ENCODE measurements at regions of chr9 and their contacts with region 1.

Region 1: GRCh38 chr9:114653556-114654159 is 3.9 kb downstream of the TEX53 start:
- DNase-seq: peak; percentile 55
- H3K4me3 ChIP-seq: no peak overlapping the region
- H3K27ac ChIP-seq: no peak overlapping the region
- H3K27me3 ChIP-seq: peaks cover 4% of the 10 kb centered on the region
- CTCF ChIP-seq: peak; percentile 99

Region 2: DNA sequence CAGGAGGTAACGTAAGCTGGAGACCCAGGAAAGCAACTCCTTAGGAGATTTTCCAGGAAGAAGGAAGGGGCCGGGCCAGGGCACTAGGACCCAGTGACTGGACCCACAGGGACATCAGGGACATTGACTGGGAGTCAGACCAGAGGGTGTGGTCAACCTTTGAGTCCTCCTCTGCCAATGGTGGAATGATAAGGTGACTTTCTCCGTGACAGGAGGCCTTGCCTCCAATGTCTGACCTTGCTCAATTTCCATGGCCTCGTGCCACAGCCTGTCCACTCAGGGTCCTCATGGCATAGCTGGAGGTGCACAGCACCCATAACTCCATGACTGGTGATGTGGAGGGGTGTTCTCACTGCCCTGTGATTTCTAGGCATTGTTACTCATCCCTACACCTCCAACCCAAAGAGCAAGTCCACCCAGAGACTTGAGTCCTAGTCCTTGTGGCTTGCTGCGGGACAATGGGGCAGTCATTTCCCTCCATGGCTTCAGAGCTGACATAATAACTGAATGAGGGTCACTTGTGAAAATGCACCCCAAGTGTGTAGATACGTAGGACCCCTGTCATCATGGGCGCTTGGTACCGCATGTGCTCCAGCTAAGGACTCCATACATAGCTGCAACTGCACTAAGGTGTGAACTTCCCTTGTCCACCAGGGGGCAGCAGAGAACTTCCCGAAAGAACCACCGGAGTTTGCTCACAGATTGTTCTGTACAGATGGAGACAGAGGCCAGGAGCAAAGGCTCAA is 571.5 kb before region 1 on chr9:
- CTCF ChIA-PET with region 1: no interaction called
- POLR2A ChIA-PET with region 1: no interaction called
- DNase-seq: peak; percentile 74
- H3K4me3 ChIP-seq: no peak overlapping the region
- H3K27ac ChIP-seq: no peak overlapping the region
- H3K27me3 ChIP-seq: peaks cover 14% of the 10 kb centered on the region
- CTCF ChIP-seq: peak; percentile 93

Region 3: DNA sequence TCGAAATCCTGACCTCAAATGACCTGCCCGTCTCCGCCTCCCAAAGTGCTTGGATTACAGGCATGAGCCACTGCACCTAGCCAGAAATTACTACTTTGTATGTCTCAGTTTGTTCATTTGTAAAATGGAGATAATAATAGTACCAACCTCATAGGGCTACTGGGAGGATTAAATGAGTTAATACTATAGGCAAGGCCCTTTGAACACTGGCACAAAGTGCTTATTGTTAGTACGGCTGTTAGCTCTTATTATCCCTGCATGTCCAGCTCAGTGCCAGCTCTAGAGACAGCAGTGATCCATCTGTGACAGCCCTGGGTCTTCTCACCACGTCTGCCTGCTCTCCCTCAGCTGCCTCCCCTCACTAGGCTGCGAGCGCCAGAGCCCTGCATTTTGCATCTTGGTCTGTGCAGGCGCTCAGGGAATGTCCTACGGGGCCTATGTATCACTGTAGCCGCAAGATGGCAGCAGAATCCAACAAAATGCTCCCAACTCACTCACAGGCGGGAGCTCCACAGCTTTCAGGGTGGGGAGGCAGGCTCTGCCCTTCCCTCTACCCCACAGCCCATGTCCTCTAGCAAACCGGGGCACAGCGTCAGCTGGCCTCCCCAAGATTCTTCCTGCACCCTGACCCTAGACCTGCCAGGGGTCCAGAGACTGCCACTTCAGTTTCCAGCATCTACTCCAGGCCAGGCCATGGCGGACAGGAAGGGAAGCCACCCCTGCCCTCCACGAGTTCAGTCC is 248.2 kb before region 1 on chr9:
- CTCF ChIA-PET with region 1: interaction called, 177 read pairs
- POLR2A ChIA-PET with region 1: interaction called, 4 read pairs
- DNase-seq: no peak
- H3K4me3 ChIP-seq: no peak overlapping the region
- H3K27ac ChIP-seq: no peak overlapping the region
- H3K27me3 ChIP-seq: no peaks in the 10 kb centered on the region
- CTCF ChIP-seq: peak; percentile 87

Region 4: DNA sequence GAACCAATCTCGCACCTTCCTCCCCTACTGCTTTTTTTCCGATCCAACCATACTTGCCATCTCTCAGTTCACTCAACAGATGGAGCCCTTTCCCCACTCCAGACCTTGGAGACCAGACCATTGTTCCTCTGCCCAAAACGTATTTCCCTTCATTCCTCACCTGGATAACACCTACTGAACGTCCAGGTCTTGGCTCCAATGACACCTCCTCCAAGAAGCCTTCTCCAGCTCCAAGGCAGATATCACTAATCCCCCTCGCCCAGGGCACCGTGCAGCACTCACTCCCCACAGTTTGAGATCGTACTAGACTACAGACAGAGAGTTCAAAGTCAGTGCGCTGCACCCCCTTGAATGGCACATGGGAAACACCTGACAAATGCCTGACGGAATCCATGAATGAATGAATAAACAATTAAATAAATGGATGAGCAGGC is 218.8 kb before region 1 on chr9:
- CTCF ChIA-PET with region 1: interaction called, 159 read pairs
- POLR2A ChIA-PET with region 1: no interaction called
- DNase-seq: no peak
- H3K4me3 ChIP-seq: no peak overlapping the region
- H3K27ac ChIP-seq: no peak overlapping the region
- H3K27me3 ChIP-seq: peaks cover 23% of the 10 kb centered on the region
- CTCF ChIP-seq: peak; percentile 75

Region 5: GRCh38 chr9:114487607-114488300 is 165.9 kb before region 1 on chr9:
- CTCF ChIA-PET with region 1: interaction called, 122 read pairs
- POLR2A ChIA-PET with region 1: no interaction called
- DNase-seq: peak; percentile 21
- H3K4me3 ChIP-seq: no peak overlapping the region
- H3K27ac ChIP-seq: no peak overlapping the region
- H3K27me3 ChIP-seq: peaks cover 8% of the 10 kb centered on the region
- CTCF ChIP-seq: peak; percentile 96

Region 6: GRCh38 chr9:114633438-114634089 is 20.1 kb before region 1 on chr9:
- CTCF ChIA-PET with region 1: interaction called, 11 read pairs
- POLR2A ChIA-PET with region 1: no interaction called
- DNase-seq: no peak
- H3K4me3 ChIP-seq: no peak overlapping the region
- H3K27ac ChIP-seq: no peak overlapping the region
- H3K27me3 ChIP-seq: no peaks in the 10 kb centered on the region
- CTCF ChIP-seq: no peak

Region 7: GRCh38 chr9:114674798-114675540 is 21.3 kb after region 1 on chr9:
- CTCF ChIA-PET with region 1: interaction called, 13 read pairs
- POLR2A ChIA-PET with region 1: no interaction called
- DNase-seq: no peak
- H3K4me3 ChIP-seq: no peak overlapping the region
- H3K27ac ChIP-seq: no peak overlapping the region
- H3K27me3 ChIP-seq: no peaks in the 10 kb centered on the region
- CTCF ChIP-seq: 0 out of 2 replicates have a peak, but pooled peaks have one; percentile 10

Region 8: DNA sequence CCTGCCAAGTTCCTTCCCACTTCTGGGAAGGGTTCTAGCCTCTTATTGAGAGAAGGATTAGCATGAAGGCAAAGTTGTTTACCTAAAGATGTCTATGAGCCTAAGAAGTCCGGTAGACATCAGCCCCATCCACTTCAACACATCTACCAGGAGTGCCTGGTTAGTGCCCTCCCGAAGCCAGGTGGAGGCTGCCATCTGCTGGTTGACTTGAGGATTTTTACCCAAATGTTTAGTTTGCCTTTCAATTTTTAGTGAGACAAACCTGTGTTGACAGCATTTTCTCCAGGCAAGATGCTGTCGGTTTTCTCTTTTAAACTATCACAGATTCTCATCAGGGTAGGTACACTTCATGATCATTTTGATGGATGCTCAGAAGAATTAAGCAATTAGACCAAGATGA is 360.3 kb after region 1 on chr9:
- CTCF ChIA-PET with region 1: interaction called, 22 read pairs
- POLR2A ChIA-PET with region 1: no interaction called
- DNase-seq: peak; percentile 69
- H3K4me3 ChIP-seq: no peak overlapping the region
- H3K27ac ChIP-seq: no peak overlapping the region
- H3K27me3 ChIP-seq: no peaks in the 10 kb centered on the region
- CTCF ChIP-seq: peak; percentile 87